Ascending aorta (tissue), 2 donors: ENCODE measurements at regions of chr9 and their contacts with region 1.

Region 1: DNA sequence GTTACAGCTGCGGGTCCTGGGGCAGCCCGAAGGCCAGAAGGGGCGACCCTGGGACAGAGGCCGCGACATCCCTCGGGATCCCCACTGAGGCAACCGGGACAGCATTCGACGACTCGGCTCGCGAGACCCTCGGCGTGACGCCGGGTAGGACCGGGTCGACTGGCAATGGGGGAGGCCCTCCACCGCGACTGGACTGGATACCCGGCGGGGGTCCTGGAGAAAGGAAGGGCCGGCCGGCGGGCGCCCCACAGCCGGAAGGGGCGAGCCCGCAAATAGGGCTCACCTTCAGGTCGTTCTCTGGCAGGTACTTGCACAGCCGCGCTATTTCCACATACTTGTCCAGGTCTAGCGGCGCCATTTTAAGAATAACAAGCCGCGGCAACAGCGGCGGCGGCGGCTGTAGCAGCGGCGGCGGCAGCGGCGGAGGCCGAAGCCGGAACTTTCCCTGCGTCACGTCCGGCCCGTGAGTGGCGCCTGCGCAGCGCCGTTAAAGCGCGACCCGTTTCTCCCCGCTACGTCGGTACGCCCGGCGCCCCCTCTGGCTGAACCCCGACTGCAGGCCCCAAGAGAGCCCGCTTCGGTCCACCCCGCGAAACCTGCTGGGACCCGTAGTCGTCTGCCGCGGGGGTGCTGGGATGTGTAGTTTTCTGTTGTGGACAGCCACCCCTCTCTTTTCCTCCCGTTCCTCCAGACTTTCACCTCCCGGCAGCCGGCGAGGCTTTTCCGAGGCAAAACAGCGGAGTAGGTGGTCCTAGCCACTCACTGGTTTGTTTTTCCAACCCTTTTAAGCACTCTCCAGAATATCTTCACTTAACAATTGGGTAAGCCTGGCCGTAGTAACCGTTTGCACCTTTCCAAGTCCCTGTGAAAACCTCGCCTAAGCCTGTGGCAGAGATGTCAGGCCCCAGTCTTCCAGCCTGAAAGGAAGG is at the start of gene PPP6C:
- DNase-seq: peak; percentile 80 to 98
- H3K4me3 ChIP-seq: peak within 1 kb of the TSS; percentile 84 to 99
- H3K27ac ChIP-seq: peak within 1 kb of the TSS; percentile 98 to 99
- H3K4me1 ChIP-seq: peaks cover 9 to 44% of the 10 kb centered on the region in 2 donors
- H3K27me3 ChIP-seq: no peaks in the 10 kb centered on the region
- CTCF ChIP-seq: peak; percentile 53 to 68 (median 60)
- total RNA-seq, gene PPP6C: 33.8 TPM

Region 2: GRCh38 chr9:125143375-125144090 is 46.1 kb before region 1 on chr9 and contains the start of gene SCAI:
- intact Hi-C with region 1: loop called (anchors 2 kb)
- DNase-seq: peak; percentile 97 to 100
- H3K4me3 ChIP-seq: peak within 1 kb of the TSS; percentile 76 to 95
- H3K27ac ChIP-seq: peak within 1 kb of the TSS; percentile 56 to 63
- H3K4me1 ChIP-seq: peaks cover 0 to 8% of the 10 kb centered on the region in 2 donors
- H3K27me3 ChIP-seq: no peaks in the 10 kb centered on the region
- CTCF ChIP-seq: peak; percentile 98 to 99 (median 99)
- total RNA-seq, gene SCAI: 2.4 TPM

Region 3: GRCh38 chr9:125200210-125201047 is 10.8 kb after region 1 on chr9 and contains the start of gene RABEPK:
- intact Hi-C with region 1: loop called (anchors 1 kb)
- DNase-seq: peak; percentile 64 to 94
- H3K4me3 ChIP-seq: peak within 1 kb of the TSS; percentile 77 to 78
- H3K27ac ChIP-seq: peak within 1 kb of the TSS; percentile 89 to 95
- H3K4me1 ChIP-seq: peaks cover 0 to 2% of the 10 kb centered on the region in 2 donors
- H3K27me3 ChIP-seq: no peaks in the 10 kb centered on the region
- CTCF ChIP-seq: no peak
- total RNA-seq, gene RABEPK: 20.4 TPM

Region 4: GRCh38 chr9:125227761-125228160 is 38.1 kb after region 1 on chr9:
- intact Hi-C with region 1: no loop called
- DNase-seq: no peak
- H3K4me3 ChIP-seq: no peak overlapping the region
- H3K27ac ChIP-seq: no peak overlapping the region
- H3K4me1 ChIP-seq: no peaks in the 10 kb centered on the region
- H3K27me3 ChIP-seq: no peaks in the 10 kb centered on the region
- CTCF ChIP-seq: no peak

Region 5: GRCh38 chr9:125513668-125514413 is 324.2 kb after region 1 on chr9:
- intact Hi-C with region 1: no loop called
- DNase-seq: no peak
- H3K4me3 ChIP-seq: peak overlapping the region; percentile 18 to 33
- H3K27ac ChIP-seq: no peak overlapping the region
- H3K4me1 ChIP-seq: no peaks in the 10 kb centered on the region
- H3K27me3 ChIP-seq: no peaks in the 10 kb centered on the region
- CTCF ChIP-seq: no peak